ENCODE measurements at regions of chr18 and their contacts with region 1.

Region 1: GRCh38 chr18:59484837-59485328 is 125.8 kb upstream of the LMAN1 start:
- DNase-seq: peak; percentile 80
- H3K4me3 ChIP-seq: no peak overlapping the region
- H3K27ac ChIP-seq: no peak overlapping the region
- H3K27me3 ChIP-seq: no peaks in the 10 kb centered on the region
- CTCF ChIP-seq: no peak

Region 2: GRCh38 chr18:59502274-59503175 is 17.6 kb after region 1 on chr18:
- CTCF ChIA-PET with region 1: no interaction called
- POLR2A ChIA-PET with region 1: interaction called, 10 read pairs
- DNase-seq: peak; percentile 85
- H3K4me3 ChIP-seq: no peak overlapping the region
- H3K27ac ChIP-seq: peak overlapping the region; percentile 85
- H3K27me3 ChIP-seq: no peaks in the 10 kb centered on the region
- CTCF ChIP-seq: no peak